MCF 10A (cell line): ENCODE measurements at regions of chr14 and their contacts with region 1.

Region 1: DNA sequence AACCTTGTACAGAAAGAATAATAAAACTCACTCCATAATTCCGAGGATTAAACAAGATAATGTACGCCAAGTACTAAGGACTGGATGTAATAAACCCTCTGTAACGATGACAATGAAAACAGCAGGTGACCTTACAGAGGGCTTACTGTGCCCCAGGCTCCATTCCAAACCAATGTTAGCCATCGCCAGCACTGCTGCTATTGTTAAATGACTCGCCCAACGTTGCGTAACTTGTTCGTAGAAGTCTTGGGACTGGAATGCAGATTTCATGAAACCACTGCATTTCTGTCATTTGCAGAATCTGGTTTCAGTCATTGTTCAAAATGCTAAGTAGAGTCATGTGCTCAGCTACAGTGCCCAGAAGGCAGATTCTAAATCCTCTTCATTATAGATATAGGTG is 728 bp upstream of the STON2 start:
- DNase-seq: peak; percentile 99
- H3K4me3 Mint-ChIP-seq: peak overlapping the region; percentile 35
- H3K27ac Mint-ChIP-seq: peak overlapping the region; percentile 99
- H3K4me1 Mint-ChIP-seq: peaks cover 37% of the 10 kb centered on the region
- H3K27me3 Mint-ChIP-seq: no peaks in the 10 kb centered on the region
- CTCF ChIP-seq: no peak

Region 2: GRCh38 chr14:81269100-81269978 is 131.5 kb before region 1 on chr14:
- CTCF ChIA-PET with region 1: interaction called, 6 read pairs
- POLR2A ChIA-PET with region 1: interaction called, 10 read pairs
- intact Hi-C with region 1: no loop called
- DNase-seq: peak; percentile 76
- H3K4me3 Mint-ChIP-seq: no peak overlapping the region
- H3K27ac Mint-ChIP-seq: peak overlapping the region; percentile 16
- H3K4me1 Mint-ChIP-seq: peaks cover 20% of the 10 kb centered on the region
- H3K27me3 Mint-ChIP-seq: no peaks in the 10 kb centered on the region
- CTCF ChIP-seq: peak; percentile 76

Region 3: GRCh38 chr14:81324018-81324417 is 76.8 kb before region 1 on chr14:
- CTCF ChIA-PET with region 1: interaction called, 4 read pairs
- POLR2A ChIA-PET with region 1: interaction called, 19 read pairs
- intact Hi-C with region 1: loop called (anchors 2 kb)
- DNase-seq: peak; percentile 89
- H3K4me3 Mint-ChIP-seq: peak overlapping the region; percentile 70
- H3K27ac Mint-ChIP-seq: peak overlapping the region; percentile 14
- H3K4me1 Mint-ChIP-seq: peaks cover 28% of the 10 kb centered on the region
- H3K27me3 Mint-ChIP-seq: no peaks in the 10 kb centered on the region
- CTCF ChIP-seq: no peak

Region 4: DNA sequence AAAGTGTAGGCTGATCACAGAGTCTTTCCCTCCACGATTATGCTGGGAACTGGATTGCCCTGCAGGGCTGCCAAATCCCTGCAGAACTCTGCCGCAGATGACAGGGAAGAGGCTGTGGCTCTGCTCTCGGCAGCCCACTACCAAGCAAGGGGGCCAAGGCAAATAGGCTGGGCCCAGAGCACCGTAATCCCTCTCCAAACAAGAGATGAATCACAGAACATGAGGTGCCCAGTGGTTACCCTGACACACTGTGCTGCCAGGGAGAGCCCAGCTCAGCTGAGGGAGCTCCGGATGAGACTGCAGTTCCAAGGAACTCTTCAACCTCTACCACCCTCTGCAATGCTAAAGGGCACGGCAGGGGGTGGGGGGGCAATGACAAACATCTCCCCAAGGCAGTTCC is 34.6 kb before region 1 on chr14:
- CTCF ChIA-PET with region 1: interaction called, 6 read pairs
- POLR2A ChIA-PET with region 1: interaction called, 10 read pairs
- intact Hi-C with region 1: no loop called
- DNase-seq: peak; percentile 10
- H3K4me3 Mint-ChIP-seq: no peak overlapping the region
- H3K27ac Mint-ChIP-seq: peak overlapping the region; percentile 70
- H3K4me1 Mint-ChIP-seq: peaks cover 19% of the 10 kb centered on the region
- H3K27me3 Mint-ChIP-seq: no peaks in the 10 kb centered on the region
- CTCF ChIP-seq: no peak

Region 5: DNA sequence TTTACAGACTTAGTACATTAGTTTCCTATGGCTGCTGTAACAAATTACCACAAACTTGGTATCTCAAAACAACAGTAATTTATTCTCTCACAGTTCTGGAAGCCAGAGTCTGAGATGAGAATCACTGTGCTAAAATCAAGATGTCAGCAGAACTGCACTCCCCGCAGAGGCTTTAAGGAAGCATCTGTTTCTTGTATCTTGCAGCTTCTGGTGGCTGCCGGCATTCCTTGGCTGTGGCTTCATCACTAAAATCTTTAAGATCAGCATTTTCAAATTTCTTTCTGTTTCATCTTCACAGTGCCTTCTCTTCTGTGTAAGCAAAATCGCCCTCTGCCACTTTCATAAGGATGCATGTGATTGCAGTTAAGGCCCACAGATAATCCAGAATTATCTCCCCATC is 10.2 kb before region 1 on chr14:
- CTCF ChIA-PET with region 1: interaction called, 11 read pairs
- POLR2A ChIA-PET with region 1: interaction called, 21 read pairs
- intact Hi-C with region 1: no loop called
- DNase-seq: no peak
- H3K4me3 Mint-ChIP-seq: no peak overlapping the region
- H3K27ac Mint-ChIP-seq: no peak overlapping the region
- H3K4me1 Mint-ChIP-seq: peaks cover 5% of the 10 kb centered on the region
- H3K27me3 Mint-ChIP-seq: no peaks in the 10 kb centered on the region
- CTCF ChIP-seq: no peak

Region 6: GRCh38 chr14:81453166-81453766 is 52.4 kb after region 1 on chr14:
- CTCF ChIA-PET with region 1: interaction called, 16 read pairs
- POLR2A ChIA-PET with region 1: interaction called, 12 read pairs
- intact Hi-C with region 1: loop called (anchors 1 kb)
- DNase-seq: peak; percentile 68
- H3K4me3 Mint-ChIP-seq: no peak overlapping the region
- H3K27ac Mint-ChIP-seq: no peak overlapping the region
- H3K4me1 Mint-ChIP-seq: peaks cover 8% of the 10 kb centered on the region
- H3K27me3 Mint-ChIP-seq: no peaks in the 10 kb centered on the region
- CTCF ChIP-seq: peak; percentile 86